Aorta (tissue), 5 donors: ENCODE measurements at regions of chr4 and their contacts with region 1.

Region 1: DNA sequence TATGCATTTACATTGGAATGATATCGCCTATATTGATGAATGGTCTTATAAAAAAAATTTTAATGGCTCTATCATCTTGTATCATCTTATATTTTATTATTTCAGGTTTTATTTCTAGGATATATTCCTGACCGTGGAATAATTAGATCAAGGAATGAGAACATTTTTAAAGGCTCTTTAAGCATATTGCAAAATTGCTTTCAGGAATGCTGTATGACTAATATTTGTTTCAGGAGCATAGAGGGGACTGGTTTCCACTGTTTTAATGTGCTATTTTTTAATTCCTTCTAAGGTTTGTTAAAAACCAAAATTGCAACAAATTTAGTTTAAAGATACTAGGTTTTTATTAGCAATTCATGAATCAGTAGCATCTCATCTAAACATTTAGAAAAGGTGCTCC is 120.2 kb downstream of the BMPR1B start:
- DNase-seq: no peak
- ATAC-seq: no peak
- H3K4me3 ChIP-seq: no peak overlapping the region
- H3K27ac ChIP-seq: no peak overlapping the region
- H3K4me1 ChIP-seq: no peaks in the 10 kb centered on the region
- H3K27me3 ChIP-seq: no peaks in the 10 kb centered on the region

Region 2: DNA sequence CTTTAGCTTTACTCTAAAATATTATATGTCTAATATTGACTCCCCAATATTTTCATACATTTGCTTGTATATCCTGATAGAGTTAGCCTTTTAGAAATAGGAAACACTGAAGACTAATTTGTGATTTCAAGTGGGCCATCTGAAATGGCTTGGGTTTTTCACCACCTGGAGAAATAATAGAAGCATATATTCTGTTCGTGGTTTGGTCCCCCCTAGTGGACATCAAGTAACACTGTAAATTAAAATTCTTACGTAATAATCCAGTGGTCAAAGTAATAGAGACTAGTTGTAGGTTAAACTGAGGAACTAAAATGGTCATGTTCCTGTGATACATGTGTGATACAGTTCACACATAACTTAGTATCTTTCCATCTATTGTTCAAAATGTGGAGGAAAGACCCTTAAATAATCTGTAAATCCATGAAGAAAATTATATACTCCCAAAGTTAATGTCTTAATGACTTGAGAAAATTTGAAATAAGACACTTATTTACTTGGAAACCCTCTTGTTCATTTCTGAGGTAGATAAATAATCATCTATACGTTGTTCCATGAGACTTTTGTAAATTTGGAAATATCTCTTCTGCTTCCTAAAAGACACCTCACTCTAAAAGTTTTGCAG is 750.2 kb before region 1 on chr4:
- intact Hi-C with region 1: no loop called
- DNase-seq: no peak
- ATAC-seq: no peak
- H3K4me3 ChIP-seq: no peak overlapping the region
- H3K27ac ChIP-seq: no peak overlapping the region
- H3K4me1 ChIP-seq: no peaks in the 10 kb centered on the region
- H3K27me3 ChIP-seq: no peaks in the 10 kb centered on the region

Region 3: DNA sequence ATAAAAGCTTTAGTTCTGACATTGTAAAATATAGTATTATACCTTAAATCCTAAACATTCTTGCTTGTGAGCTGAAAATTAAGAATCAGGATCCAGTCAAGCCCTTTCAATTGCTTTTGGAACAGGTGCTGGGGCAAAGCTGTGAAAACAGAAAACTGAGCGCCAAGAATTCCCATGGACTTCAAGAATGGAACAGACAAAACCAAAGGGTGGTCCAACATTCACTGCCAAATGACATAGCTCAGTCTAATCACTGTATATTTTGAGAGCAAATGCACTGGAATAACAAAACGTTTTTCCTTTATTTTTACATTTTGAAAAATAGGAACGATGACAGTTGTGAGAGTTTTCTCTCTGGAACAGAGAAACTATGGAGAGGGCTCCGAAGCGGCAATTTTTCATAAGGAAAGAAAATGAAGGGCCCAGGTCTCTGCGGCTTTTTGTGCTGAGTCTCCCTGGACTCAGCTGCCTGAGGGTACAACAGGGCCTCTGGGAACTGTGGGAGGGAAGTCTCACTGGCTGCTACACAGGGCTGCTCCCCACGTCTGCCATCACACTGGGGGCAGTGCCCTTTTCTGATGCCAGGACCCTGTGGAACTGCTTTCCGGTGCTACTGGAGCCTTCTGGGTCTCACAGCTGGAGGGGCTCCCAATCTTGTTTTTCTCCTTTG is 176.2 kb before region 1 on chr4:
- intact Hi-C with region 1: no loop called
- DNase-seq: no peak
- ATAC-seq: peak; percentile 33
- H3K4me3 ChIP-seq: no peak overlapping the region
- H3K27ac ChIP-seq: no peak overlapping the region
- H3K4me1 ChIP-seq: no peaks in the 10 kb centered on the region
- H3K27me3 ChIP-seq: no peaks in the 10 kb centered on the region

Region 4: GRCh38 chr4:94814237-94814636 is 63.7 kb before region 1 on chr4:
- intact Hi-C with region 1: loop called in 1 of 2 experiments (anchors 10 kb)
- DNase-seq: no peak
- ATAC-seq: no peak
- H3K4me3 ChIP-seq: no peak overlapping the region
- H3K27ac ChIP-seq: no peak overlapping the region
- H3K4me1 ChIP-seq: peaks cover 2 to 5% of the 10 kb centered on the region in 2 donors
- H3K27me3 ChIP-seq: no peaks in the 10 kb centered on the region

Region 5: DNA sequence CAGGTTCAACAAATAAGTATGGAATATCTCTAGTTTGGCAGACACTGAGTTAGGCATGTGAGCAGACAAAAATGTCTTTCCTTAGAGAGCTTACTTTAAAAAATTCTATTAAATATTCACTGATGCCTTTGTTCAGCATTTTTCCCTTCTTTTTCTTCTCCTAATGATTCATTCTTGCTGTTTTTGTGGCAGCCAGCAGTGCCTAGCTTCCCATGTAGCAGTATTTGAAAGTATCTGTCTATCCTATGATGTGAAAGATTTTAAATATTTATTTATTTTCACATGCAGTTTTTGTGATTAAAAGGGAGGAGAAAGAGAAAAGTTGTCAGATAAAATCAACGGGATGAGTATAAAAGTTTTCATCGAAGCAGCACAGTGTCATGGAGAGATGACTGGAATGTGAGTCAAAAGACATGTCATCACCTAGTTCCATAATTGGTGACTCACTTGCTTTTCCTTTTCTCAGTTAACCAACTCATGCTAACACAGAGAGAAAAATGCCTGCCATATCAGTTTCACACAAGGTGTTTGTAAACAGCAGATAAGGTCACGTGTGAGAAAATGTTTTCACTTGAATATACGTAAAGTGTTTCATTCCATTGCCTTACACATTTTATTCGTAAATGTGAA is 50.4 kb before region 1 on chr4:
- intact Hi-C with region 1: no loop called
- DNase-seq: no peak
- ATAC-seq: no peak
- H3K4me3 ChIP-seq: no peak overlapping the region
- H3K27ac ChIP-seq: no peak overlapping the region
- H3K4me1 ChIP-seq: peaks cover 0 to 2% of the 10 kb centered on the region in 2 donors
- H3K27me3 ChIP-seq: no peaks in the 10 kb centered on the region

Region 6: GRCh38 chr4:94976371-94977011 is 98.5 kb after region 1 on chr4:
- intact Hi-C with region 1: no loop called
- DNase-seq: no peak
- ATAC-seq: peak; percentile 75
- H3K4me3 ChIP-seq: no peak overlapping the region
- H3K27ac ChIP-seq: no peak overlapping the region
- H3K4me1 ChIP-seq: peaks cover 0 to 2% of the 10 kb centered on the region in 2 donors
- H3K27me3 ChIP-seq: no peaks in the 10 kb centered on the region